Heart left ventricle (tissue), 16 donors: ENCODE measurements at regions of chr16 and their contacts with region 1.

Region 1: DNA sequence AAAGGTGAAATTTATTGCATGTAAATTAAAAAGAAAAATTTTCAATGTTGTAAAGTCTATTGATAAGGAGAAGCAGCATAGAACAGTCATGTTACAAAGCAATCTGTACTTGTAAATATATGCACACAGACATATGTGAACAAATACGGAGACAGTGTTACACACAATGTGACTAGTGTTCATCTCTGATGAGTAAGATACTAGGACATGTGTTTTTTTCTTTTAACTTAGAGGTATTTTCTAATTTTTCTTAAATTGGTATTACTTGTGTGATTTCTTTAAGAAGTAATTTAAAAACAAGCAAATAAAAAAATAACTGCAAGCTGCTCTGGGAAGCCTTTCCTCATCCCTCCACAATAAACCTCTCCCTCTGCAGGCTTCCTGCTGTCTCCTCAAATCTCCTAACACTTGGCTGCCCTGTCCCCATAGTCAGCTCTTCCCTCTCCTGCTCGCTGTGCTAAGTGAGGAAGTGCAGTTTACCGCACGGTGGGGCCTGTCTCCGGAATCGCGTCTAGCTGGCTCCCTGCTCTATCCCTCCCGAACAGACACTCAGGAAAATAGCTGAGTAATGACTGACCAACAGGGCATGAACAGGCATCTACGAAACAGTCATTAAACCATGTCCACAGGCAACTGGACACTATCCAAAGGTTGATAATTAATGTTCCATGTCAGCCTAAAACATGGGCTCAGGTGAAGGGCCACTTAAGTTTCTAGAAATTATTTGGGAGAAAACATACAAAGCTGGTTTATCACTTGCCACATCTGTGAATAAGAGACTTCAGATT is 35.9 kb downstream of the CMTM4 start:
- DNase-seq: peak; percentile 71 to 82 (median 75)
- ATAC-seq: peak; percentile 93 to 97 (median 97)
- H3K4me3 ChIP-seq: no peak overlapping the region
- H3K27ac ChIP-seq: peak overlapping the region; percentile 0 to 78 (median 62)
- H3K4me1 ChIP-seq: peaks cover 3 to 32% (median 25%) of the 10 kb centered on the region in 12 donors
- H3K27me3 ChIP-seq: no peaks in the 10 kb centered on the region
- CTCF ChIP-seq: peak in 7 of 12 donors; percentile 5 to 52 (median 33)
- POLR2A ChIP-seq: no peak

Region 2: GRCh38 chr16:66364117-66364967 is 296.3 kb before region 1 on chr16:
- intact Hi-C with region 1: no loop called
- DNase-seq: peak; percentile 72 to 86 (median 76)
- ATAC-seq: peak; percentile 18 to 52 (median 40)
- H3K4me3 ChIP-seq: peak overlapping the region in 3 of 12 donors; percentile 7 to 19 (median 10)
- H3K27ac ChIP-seq: peak overlapping the region; percentile 35 to 95 (median 81)
- H3K4me1 ChIP-seq: peaks cover under 1 to 68% (median 39%) of the 10 kb centered on the region in 12 donors
- H3K27me3 ChIP-seq: peaks cover 0 to 6% (median 0%) of the 10 kb centered on the region in 9 donors
- CTCF ChIP-seq: no peak
- POLR2A ChIP-seq: no peak

Region 3: GRCh38 chr16:66639091-66639885 is 21.3 kb before region 1 on chr16:
- intact Hi-C with region 1: loop called in 1 of 10 experiments (anchors 2 kb)
- DNase-seq: peak in 1 of 5 donors; percentile 4
- ATAC-seq: no peak
- H3K4me3 ChIP-seq: no peak overlapping the region
- H3K27ac ChIP-seq: no peak overlapping the region
- H3K4me1 ChIP-seq: no peaks in the 10 kb centered on the region
- H3K27me3 ChIP-seq: no peaks in the 10 kb centered on the region
- CTCF ChIP-seq: no peak
- POLR2A ChIP-seq: no peak